Heart right ventricle (tissue), 16 donors: ENCODE measurements at regions of chr21 and their contacts with region 1.

Region 1: DNA sequence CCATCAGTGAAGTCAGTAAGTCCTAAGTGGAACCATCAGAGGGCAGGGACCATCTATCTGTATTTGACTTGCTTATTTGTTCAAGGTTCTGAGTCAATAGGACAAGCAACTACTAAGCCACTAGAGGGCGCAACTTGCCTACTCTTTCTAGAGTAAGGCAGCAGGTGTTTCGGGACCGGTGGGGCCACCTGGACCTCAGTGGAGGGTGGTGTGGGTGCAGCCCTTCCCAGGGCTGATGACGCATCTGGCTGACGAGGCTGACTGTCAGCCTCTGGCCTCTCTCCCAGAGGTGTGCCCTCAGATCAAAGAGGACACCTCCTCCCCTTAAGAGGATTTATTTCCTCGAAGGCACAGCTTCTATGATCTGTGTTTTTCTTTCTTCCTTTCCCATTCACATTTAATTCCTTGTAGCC is 6.6 kb downstream of the CBR3 start:
- DNase-seq: peak in 1 of 2 donors; percentile 86
- ATAC-seq: peak; percentile 73 to 87 (median 82)
- H3K4me3 ChIP-seq: no peak overlapping the region
- H3K27ac ChIP-seq: no peak overlapping the region
- H3K4me1 ChIP-seq: peaks cover 0 to 11% (median 5%) of the 10 kb centered on the region in 9 donors
- H3K27me3 ChIP-seq: no peaks in the 10 kb centered on the region
- CTCF ChIP-seq: peak; percentile 64 to 87 (median 84)

Region 2: GRCh38 chr21:36209626-36210171 is 68.2 kb after region 1 on chr21:
- intact Hi-C with region 1: loop called (anchors 2 to 10 kb)
- DNase-seq: peak in 1 of 2 donors; percentile 19
- ATAC-seq: no peak
- H3K4me3 ChIP-seq: no peak overlapping the region
- H3K27ac ChIP-seq: no peak overlapping the region
- H3K4me1 ChIP-seq: peaks cover 0 to 7% (median 0%) of the 10 kb centered on the region in 9 donors
- H3K27me3 ChIP-seq: no peaks in the 10 kb centered on the region
- CTCF ChIP-seq: peak in 8 of 9 donors; percentile 16 to 61 (median 50)

Region 3: DNA sequence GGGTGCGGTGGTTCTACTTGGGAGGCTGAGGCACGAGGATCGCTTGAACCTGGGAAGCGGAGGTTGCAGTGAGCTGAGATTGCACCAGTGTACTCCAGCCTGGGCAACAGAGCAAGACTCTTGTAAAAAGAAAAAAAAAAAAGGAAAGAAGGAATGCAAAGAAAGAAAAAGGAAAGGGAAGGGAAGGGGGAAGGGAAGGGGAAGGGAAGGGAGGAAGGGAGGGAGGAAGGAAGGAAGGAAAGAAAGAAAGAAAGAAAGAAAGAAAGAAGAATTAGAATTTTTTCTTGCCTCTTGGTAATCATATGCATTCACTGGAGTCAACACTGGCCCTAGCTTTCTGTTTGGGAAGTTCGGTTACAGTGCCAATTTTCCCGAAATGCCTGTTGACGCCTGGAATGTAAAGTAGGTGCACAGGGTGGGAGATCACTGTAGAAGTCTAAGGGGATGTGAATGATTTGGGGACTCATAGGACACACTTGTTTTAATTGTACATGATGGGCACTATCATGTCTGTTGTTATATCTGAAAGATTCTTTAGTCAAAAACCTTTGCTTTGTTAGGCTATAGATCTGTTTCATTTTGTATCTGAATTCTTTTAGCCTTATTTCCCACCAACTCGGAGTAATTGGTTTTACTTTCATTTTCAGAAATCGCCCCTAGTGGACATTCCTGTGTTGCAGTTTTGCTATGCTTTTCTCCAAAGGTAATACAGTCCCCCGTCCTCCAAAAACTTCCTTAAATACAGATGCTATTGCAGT is 118.7 kb after region 1 on chr21:
- intact Hi-C with region 1: loop called in 1 of 10 experiments (anchors 10 kb)
- DNase-seq: peak in 1 of 2 donors; percentile 57
- ATAC-seq: peak; percentile 47 to 90 (median 78)
- H3K4me3 ChIP-seq: peak overlapping the region; percentile 13 to 65 (median 54)
- H3K27ac ChIP-seq: peak overlapping the region in 9 of 10 donors; percentile 50 to 92 (median 79)
- H3K4me1 ChIP-seq: peaks cover 0 to 10% (median 0%) of the 10 kb centered on the region in 9 donors
- H3K27me3 ChIP-seq: no peaks in the 10 kb centered on the region
- CTCF ChIP-seq: peak; percentile 59 to 84 (median 75)

Region 4: GRCh38 chr21:36330904-36331303 is 189.4 kb after region 1 on chr21:
- intact Hi-C with region 1: loop called in 7 of 10 experiments (anchors 2 to 10 kb)
- DNase-seq: peak; percentile 29 to 34
- ATAC-seq: peak; percentile 66 to 84 (median 82)
- H3K4me3 ChIP-seq: no peak overlapping the region
- H3K27ac ChIP-seq: peak overlapping the region in 1 of 10 donors; percentile 18
- H3K4me1 ChIP-seq: peaks cover 0 to 67% (median 48%) of the 10 kb centered on the region in 9 donors
- H3K27me3 ChIP-seq: no peaks in the 10 kb centered on the region
- CTCF ChIP-seq: peak; percentile 43 to 80 (median 69)